Activated CD8-positive, alpha-beta T cell treated with anti-CD3 and anti-CD28 coated beads for 36 hours (primary cell): ENCODE measurements at regions of chr1 and their contacts with region 1.

Region 1: GRCh38 chr1:210448297-210448892 is 119.7 kb downstream of the HHAT start:
- DNase-seq: peak; percentile 49
- ATAC-seq: no peak
- H3K4me3 Mint-ChIP-seq: no peak overlapping the region
- H3K27ac Mint-ChIP-seq: no peak overlapping the region
- H3K4me1 Mint-ChIP-seq: peaks cover 22% of the 10 kb centered on the region
- H3K27me3 Mint-ChIP-seq: no peaks in the 10 kb centered on the region
- CTCF ChIP-seq: peak; percentile 73

Region 2: GRCh38 chr1:210568631-210569030 is 120.2 kb after region 1 on chr1:
- CTCF ChIA-PET with region 1: interaction called, 3 read pairs
- POLR2A ChIA-PET with region 1: no interaction called
- intact Hi-C with region 1: loop called (anchors 10 kb)
- DNase-seq: no peak
- ATAC-seq: no peak
- H3K4me3 Mint-ChIP-seq: no peak overlapping the region
- H3K27ac Mint-ChIP-seq: no peak overlapping the region
- H3K4me1 Mint-ChIP-seq: no peaks in the 10 kb centered on the region
- H3K27me3 Mint-ChIP-seq: no peaks in the 10 kb centered on the region
- CTCF ChIP-seq: no peak

Region 3: DNA sequence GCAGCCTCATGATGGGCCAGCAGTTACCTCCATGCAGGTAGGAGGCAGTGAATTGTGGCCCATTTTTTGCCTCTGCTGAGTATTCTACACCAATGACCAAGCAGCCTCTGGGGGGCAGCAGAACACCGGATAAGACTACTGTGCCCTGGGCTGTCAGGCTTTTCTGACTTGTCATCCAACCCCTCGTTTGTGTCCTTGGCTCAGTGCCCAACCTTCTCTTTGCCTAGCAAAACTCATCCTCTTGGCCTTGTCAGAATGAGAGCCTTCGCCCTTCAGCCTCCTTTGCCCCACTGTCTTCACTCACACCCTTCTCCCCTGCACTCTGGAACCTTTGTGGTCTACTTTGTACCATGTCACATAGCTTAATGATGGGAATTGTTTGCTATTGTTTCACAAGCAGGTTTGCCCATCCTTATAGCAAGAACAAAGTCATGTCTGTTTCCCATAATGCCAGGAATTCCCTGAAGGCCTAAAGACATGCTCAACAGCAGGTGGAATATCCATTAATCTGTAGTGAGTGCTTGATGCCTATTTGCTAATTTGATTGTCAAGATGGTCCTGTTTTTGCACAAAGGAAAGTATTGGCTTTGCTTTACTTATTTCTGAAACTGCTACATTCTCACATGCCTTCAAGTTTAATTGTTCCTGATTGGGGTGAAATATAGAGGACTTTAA is 136.2 kb after region 1 on chr1:
- CTCF ChIA-PET with region 1: interaction called, 32 read pairs
- POLR2A ChIA-PET with region 1: no interaction called
- intact Hi-C with region 1: loop called (anchors 5 kb)
- DNase-seq: peak; percentile 91
- ATAC-seq: peak; percentile 88
- H3K4me3 Mint-ChIP-seq: no peak overlapping the region
- H3K27ac Mint-ChIP-seq: no peak overlapping the region
- H3K4me1 Mint-ChIP-seq: peaks cover 11% of the 10 kb centered on the region
- H3K27me3 Mint-ChIP-seq: no peaks in the 10 kb centered on the region
- CTCF ChIP-seq: peak; percentile 67